ENCODE measurements at regions of chr11 and their contacts with region 1.

Region 1: DNA sequence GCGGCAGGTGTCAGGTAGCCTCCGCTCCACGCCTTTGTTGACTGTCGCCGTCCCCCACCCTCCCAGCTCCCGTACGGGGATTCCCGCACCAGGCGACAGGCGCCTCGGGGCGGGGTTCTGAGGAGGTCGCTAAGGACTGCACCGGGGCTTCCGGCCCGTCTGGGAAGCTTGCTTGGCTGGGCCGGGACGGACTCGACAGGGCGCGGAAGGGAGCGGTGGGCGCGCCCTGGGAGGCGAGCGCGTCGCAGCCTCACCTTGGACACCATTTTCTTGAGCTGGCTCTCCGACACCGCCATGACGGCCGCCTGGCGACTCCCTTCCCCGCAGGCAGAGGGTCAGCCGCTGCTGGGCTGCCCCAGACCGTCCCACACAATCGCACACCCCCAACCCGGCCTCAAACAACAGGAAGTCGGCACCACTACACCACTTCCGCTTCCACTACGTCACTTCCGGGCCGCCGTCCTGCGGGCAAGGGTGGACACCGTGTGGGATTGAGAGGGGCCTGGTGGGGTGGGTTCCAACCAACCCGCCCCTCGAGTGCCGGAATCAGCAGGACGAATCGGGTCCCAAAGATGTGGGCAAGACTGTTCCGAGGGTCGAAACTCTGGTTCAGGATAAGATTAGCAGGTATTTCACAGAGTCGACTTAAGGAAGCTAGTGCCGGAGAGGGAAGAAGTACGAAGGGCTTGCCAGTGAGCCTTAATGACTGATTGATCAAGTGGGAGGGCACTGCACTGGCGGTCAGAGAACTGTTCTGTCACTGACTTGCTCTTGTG is at the start of gene TSG101:
- DNase-seq: peak; percentile 84 to 96 (median 95)
- ATAC-seq: peak; percentile 78
- H3K4me3 ChIP-seq: peak within 1 kb of the TSS; percentile 83 to 90
- H3K4me3 Mint-ChIP-seq: peak within 1 kb of the TSS; percentile 100
- H3K27ac ChIP-seq: peak within 1 kb of the TSS; percentile 97 to 99
- H3K27ac Mint-ChIP-seq: peak within 1 kb of the TSS; percentile 100
- H3K4me1 ChIP-seq: peaks cover 23% of the 10 kb centered on the region
- H3K4me1 Mint-ChIP-seq: peaks cover 54% of the 10 kb centered on the region
- H3K27me3 ChIP-seq: no peaks in the 10 kb centered on the region
- H3K27me3 Mint-ChIP-seq: no peaks in the 10 kb centered on the region
- CTCF ChIP-seq: no peak
- total RNA-seq, gene TSG101: 36.2 to 36.5 TPM

Region 2: GRCh38 chr11:17077520-17078401 is 1448.9 kb before region 1 on chr11 and contains the start of gene RPS13:
- CTCF ChIA-PET with region 1: no interaction called
- POLR2A ChIA-PET with region 1: no interaction called
- intact Hi-C with region 1: loop called in 1 of 2 experiments (anchors 5 kb)
- DNase-seq: peak; percentile 88 to 99 (median 95)
- ATAC-seq: peak; percentile 94
- H3K4me3 ChIP-seq: peak within 1 kb of the TSS; percentile 86 to 95
- H3K4me3 Mint-ChIP-seq: peak within 1 kb of the TSS; percentile 99
- H3K27ac ChIP-seq: peak within 1 kb of the TSS; percentile 92 to 96
- H3K27ac Mint-ChIP-seq: peak within 1 kb of the TSS; percentile 99
- H3K4me1 ChIP-seq: peaks cover 25% of the 10 kb centered on the region
- H3K4me1 Mint-ChIP-seq: peaks cover 48% of the 10 kb centered on the region
- H3K27me3 ChIP-seq: no peaks in the 10 kb centered on the region
- H3K27me3 Mint-ChIP-seq: no peaks in the 10 kb centered on the region
- CTCF ChIP-seq: no peak
- total RNA-seq, gene RPS13: 2,112 to 2,169 TPM

Region 3: GRCh38 chr11:18105802-18106574 is 420.7 kb before region 1 on chr11 and contains the start of gene SAAL1:
- CTCF ChIA-PET with region 1: interaction called, 3 read pairs
- POLR2A ChIA-PET with region 1: no interaction called
- intact Hi-C with region 1: loop called (anchors 1 to 10 kb)
- DNase-seq: peak; percentile 73 to 93 (median 91)
- ATAC-seq: peak; percentile 97
- H3K4me3 ChIP-seq: peak within 1 kb of the TSS; percentile 75 to 99
- H3K4me3 Mint-ChIP-seq: peak within 1 kb of the TSS; percentile 86
- H3K27ac ChIP-seq: peak within 1 kb of the TSS; percentile 61 to 62
- H3K27ac Mint-ChIP-seq: peak within 1 kb of the TSS; percentile 87
- H3K4me1 ChIP-seq: peaks cover 10% of the 10 kb centered on the region
- H3K4me1 Mint-ChIP-seq: peaks cover 40% of the 10 kb centered on the region
- H3K27me3 ChIP-seq: no peaks in the 10 kb centered on the region
- H3K27me3 Mint-ChIP-seq: peaks cover 14% of the 10 kb centered on the region
- CTCF ChIP-seq: peak; percentile 86
- total RNA-seq, gene SAAL1: 23.8 to 28.2 TPM

Region 4: GRCh38 chr11:18395735-18396504 is 130.8 kb before region 1 on chr11:
- CTCF ChIA-PET with region 1: no interaction called
- POLR2A ChIA-PET with region 1: interaction called, 14 read pairs
- intact Hi-C with region 1: loop called (anchors 1 to 2 kb)
- DNase-seq: peak; percentile 89 to 98 (median 92)
- ATAC-seq: peak; percentile 54
- H3K4me3 ChIP-seq: peak overlapping the region; percentile 86 to 98
- H3K4me3 Mint-ChIP-seq: peak overlapping the region; percentile 97
- H3K27ac ChIP-seq: peak overlapping the region; percentile 90
- H3K27ac Mint-ChIP-seq: peak overlapping the region; percentile 96
- H3K4me1 ChIP-seq: peaks cover 22% of the 10 kb centered on the region
- H3K4me1 Mint-ChIP-seq: peaks cover 35% of the 10 kb centered on the region
- H3K27me3 ChIP-seq: no peaks in the 10 kb centered on the region
- H3K27me3 Mint-ChIP-seq: no peaks in the 10 kb centered on the region
- CTCF ChIP-seq: no peak

Region 5: GRCh38 chr11:18588297-18589252 is 61.9 kb after region 1 on chr11 and contains the start of gene UEVLD:
- CTCF ChIA-PET with region 1: no interaction called
- POLR2A ChIA-PET with region 1: no interaction called
- intact Hi-C with region 1: loop called in 1 of 2 experiments (anchors 2 kb)
- DNase-seq: peak; percentile 5 to 85 (median 44)
- ATAC-seq: peak; percentile 55
- H3K4me3 ChIP-seq: peak within 1 kb of the TSS; percentile 75 to 92
- H3K4me3 Mint-ChIP-seq: no peak within 1 kb of the TSS
- H3K27ac ChIP-seq: peak within 1 kb of the TSS; percentile 57 to 92
- H3K27ac Mint-ChIP-seq: no peak within 1 kb of the TSS
- H3K4me1 ChIP-seq: peaks cover 17% of the 10 kb centered on the region
- H3K4me1 Mint-ChIP-seq: peaks cover 10% of the 10 kb centered on the region
- H3K27me3 ChIP-seq: no peaks in the 10 kb centered on the region
- H3K27me3 Mint-ChIP-seq: no peaks in the 10 kb centered on the region
- CTCF ChIP-seq: no peak
- total RNA-seq, gene UEVLD: 1.1 to 2.1 TPM

Region 6: DNA sequence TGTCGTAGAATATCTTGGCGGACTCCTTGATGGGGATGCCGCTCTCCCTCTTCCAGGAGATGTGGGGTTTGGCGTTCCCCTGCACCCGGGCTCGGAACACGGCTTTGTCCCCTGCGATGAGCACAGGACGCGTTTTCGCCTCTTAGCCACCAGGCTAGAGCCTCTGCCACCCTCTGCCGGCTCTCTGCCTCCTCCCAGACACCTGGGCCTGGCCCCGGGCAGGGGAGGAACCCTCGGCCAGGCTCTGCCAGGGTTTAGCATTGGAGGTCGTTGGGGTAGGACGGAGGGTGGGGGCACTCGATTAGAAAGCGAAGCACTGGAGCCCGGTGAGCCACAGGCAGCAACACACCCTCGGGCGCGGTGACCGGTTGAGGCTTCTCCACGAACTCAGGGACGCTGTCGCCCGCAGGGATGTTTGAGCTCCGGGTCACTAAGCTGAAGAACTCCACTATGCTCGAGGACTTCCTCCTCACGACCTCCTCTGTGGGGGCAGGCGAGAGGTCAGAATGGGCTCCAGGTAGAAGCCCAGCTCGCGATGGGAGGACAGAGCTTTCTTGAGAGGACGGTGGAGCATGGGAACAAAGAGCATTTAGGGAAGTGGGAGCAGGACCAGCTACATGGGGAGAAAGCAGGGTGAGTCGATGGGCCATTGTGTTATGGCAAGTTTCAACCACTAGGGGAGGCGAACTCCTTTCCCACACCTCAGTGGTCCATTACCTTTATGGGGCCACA is 195.0 kb after region 1 on chr11:
- CTCF ChIA-PET with region 1: interaction called, 5 read pairs
- POLR2A ChIA-PET with region 1: interaction called, 8 read pairs
- intact Hi-C with region 1: loop called in 1 of 2 experiments (anchors 1 kb)
- DNase-seq: peak in 8 of 9 experiments; percentile 24 to 75 (median 50)
- ATAC-seq: peak; percentile 48
- H3K4me3 ChIP-seq: peak overlapping the region; percentile 80 to 92
- H3K4me3 Mint-ChIP-seq: peak overlapping the region; percentile 84
- H3K27ac ChIP-seq: peak overlapping the region; percentile 12 to 48
- H3K27ac Mint-ChIP-seq: no peak overlapping the region
- H3K4me1 ChIP-seq: peaks cover 4% of the 10 kb centered on the region
- H3K4me1 Mint-ChIP-seq: peaks cover 7% of the 10 kb centered on the region
- H3K27me3 ChIP-seq: no peaks in the 10 kb centered on the region
- H3K27me3 Mint-ChIP-seq: no peaks in the 10 kb centered on the region
- CTCF ChIP-seq: peak; percentile 80